Cardiac septum (tissue), 1 donor: ENCODE measurements at regions of chr4 and their contacts with region 1.

Region 1: DNA sequence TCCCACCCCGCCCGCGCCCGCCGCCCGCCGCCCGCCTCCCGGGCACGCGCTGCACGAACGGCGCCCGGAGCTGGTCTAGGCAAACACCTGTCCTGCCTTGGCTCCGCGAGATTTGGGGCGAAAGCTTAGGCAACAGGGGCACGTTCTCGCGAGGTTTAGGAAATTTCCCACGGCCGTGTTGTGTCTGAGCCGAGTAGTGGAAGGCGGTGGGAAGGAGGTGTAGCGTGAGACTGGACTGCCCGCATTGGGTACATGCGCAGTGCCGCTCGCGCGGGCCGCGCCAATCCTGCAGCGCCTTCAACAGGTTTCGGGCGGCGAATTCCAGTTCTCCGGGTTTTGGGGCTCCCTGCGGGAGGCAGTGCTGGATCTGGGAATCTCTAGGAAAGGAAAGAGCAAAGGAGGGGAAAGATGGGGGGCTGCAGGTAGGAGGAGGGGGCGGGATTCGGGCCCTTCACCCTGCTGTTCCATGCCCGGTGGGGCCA is 1.3 kb upstream of the RBPJ start:
- DNase-seq: peak; percentile 98

Region 2: GRCh38 chr4:25919676-25920075 is 399.8 kb before region 1 on chr4:
- intact Hi-C with region 1: loop called (anchors 5 kb)
- DNase-seq: no peak

Region 3: GRCh38 chr4:26028793-26029567 is 290.5 kb before region 1 on chr4:
- intact Hi-C with region 1: loop called (anchors 10 kb)
- DNase-seq: peak; percentile 87

Region 4: DNA sequence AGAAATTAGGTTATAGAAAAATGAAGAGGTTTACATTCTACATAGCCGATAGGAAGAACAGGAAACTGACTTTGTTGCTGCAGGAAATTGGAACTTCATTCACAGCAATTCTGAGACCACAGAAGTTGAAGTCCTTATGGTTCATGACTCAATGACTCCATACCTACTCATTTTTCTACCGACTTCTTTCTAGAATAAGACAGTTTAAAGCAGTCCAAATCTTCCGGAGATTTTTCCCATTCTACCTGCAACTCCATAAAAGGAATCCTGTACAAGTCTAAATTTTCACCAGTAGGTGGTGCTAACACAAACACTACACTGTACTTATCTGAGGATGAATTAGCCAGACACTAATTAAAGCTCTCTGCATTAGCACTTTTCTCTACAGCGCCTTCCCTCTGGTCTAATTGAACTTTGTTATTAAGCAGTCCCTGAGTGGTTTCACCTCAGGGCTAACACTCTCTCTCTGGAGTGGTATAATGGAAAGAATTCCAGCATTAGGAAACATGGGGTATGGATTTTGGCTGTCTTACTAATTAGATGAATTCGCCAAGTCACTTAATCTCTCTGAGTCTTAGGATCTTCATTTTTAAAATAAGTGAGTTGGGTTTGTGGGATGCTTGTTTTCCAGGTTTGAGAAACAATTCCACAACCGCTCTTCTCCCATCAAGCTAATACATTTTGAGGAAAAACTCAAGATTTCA is 237.6 kb before region 1 on chr4:
- intact Hi-C with region 1: loop called (anchors 5 kb)
- DNase-seq: no peak

Region 5: DNA sequence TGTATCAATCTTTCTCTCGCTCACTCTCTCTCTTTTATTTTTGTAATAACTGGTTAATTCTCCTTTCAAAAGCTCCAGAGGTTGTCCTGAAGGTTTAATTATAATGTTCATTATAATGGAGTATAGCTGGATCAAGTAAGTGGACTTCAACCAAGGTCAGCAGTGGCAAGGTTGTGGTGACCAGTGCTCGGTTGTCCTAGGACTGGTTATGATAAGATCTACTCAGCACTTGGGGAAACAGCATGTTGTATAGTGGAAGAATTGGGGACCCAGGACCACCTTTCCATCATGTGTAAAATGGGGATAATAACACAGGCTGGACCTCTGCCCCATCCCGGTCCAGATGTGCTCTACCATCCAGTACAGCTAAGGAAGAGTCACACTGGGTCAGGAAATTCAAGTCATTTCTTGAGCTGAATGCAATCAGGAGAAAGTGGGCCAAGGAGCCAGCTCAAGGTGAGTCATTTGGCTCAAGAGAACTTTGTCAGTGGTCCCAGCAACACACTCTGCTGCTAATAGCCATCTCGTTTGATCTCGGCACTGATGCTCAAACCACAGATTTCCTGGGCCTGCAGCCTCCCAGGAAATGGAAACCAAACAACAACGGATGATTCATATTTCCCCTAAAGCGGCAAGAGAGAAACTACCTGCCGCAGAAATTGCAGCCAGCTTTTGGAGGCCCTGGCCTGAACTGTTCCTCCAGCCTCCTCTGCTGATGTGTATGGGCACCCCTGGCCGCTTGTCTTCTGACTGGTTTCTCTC is 122.3 kb before region 1 on chr4:
- intact Hi-C with region 1: no loop called
- DNase-seq: no peak

Region 6: DNA sequence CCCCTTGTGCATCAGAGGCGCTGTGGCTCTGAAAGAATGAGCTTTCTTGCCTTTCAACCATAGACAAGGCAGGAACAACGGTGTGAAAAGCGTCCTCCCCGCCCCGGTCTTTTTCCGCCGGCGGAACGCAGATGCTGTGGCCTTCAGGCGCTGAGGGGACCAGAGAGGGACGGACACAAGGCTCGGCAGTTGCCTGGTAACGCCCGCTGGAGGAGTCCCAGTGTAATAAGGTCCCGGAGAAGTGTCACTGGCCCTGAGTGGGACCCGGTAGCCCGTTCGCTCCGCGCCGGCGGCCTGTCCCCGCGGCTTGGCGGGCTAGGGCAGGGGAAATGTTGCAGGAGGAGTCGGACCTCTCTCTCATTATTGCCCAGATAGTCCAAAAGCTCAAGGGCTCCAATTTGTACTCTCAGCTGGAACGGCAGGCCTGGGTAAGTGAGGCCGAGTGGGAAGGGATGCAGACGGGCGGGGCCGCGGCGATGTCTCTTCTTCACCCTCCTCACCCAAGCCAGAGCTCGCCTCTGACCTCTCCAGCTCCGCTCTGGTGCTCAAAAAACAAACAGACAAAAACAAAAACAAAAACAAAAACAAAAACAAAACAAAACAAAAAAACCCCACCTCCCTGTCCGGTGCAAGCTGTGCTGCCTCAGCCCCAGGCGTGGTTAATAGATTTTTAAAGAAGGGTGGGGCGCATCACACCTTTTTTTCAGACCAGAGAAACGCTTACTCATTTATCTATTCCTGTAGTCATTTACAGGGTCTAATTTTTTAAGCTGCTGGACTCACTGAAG is 264.6 kb after region 1 on chr4 and contains the start of gene TBC1D19:
- intact Hi-C with region 1: loop called (anchors 5 kb)
- DNase-seq: peak; percentile 93
- total RNA-seq, gene TBC1D19: 8.9 TPM